PC-9 (cell line): ENCODE measurements at regions of chr1 and their contacts with region 1.

Region 1: DNA sequence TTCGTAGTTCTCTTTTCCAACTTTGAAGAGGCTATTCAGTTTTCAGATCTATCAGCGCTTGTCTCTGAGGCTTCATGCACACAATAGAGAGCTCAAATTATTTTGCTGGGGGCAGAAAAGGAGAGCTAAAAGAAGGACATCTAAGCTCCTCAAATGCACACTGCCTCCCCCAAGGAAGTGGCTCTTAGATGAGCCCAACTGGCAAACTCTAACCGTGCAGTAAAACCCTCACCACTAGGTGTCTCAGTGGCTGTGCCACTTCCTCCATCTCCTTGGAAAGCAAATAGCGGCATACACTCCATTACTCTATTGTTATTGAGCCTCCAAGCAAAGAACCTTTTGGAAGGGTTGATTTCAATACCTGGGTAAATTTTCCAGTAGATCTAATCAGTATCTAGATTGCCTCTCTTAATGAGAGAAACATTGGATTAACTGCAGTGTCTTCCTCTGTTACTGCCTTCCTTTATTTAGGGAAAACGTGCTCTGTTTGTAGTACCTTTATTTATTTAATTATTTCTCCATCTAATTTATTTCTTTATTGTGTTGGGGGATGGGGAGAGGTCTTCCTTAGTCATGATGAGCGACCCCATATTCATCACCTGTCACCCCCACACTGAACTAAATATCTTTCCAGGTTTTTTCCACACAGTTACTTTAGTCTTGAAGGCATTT is 9.2 kb upstream of the SFPQ start:
- DNase-seq: peak; percentile 60 to 65
- H3K4me3 ChIP-seq: no peak overlapping the region
- H3K27ac ChIP-seq: no peak overlapping the region
- H3K4me1 ChIP-seq: no peaks in the 10 kb centered on the region
- H3K27me3 ChIP-seq: no peaks in the 10 kb centered on the region
- CTCF ChIP-seq: peak; percentile 80

Region 2: DNA sequence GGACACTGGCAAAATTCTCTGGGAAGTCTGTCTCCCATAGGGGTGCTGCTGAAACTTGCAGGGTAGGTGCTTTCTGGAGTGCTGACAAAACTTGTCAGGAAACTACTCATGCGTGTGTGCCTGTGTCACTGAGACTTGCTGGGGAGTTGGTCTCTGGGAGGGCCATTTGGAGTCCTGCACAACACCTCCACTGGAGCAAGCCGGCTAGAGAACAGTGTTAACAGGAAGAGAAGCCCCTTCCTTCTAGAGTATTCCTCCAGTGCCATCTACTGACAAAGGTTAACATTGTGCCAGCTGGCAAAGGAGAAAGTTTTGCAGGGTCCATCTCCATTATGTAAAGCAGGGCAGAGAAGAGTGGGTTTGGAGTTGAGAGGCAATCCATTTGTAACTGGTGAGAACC is 96.3 kb after region 1 on chr1:
- CTCF ChIA-PET with region 1: interaction called, 5 read pairs
- POLR2A ChIA-PET with region 1: no interaction called
- intact Hi-C with region 1: loop called (anchors 1 kb)
- DNase-seq: no peak
- H3K4me3 ChIP-seq: no peak overlapping the region
- H3K27ac ChIP-seq: no peak overlapping the region
- H3K4me1 ChIP-seq: no peaks in the 10 kb centered on the region
- H3K27me3 ChIP-seq: no peaks in the 10 kb centered on the region
- CTCF ChIP-seq: peak; percentile 52; the same call in 1 of the 2 replicates

Region 3: DNA sequence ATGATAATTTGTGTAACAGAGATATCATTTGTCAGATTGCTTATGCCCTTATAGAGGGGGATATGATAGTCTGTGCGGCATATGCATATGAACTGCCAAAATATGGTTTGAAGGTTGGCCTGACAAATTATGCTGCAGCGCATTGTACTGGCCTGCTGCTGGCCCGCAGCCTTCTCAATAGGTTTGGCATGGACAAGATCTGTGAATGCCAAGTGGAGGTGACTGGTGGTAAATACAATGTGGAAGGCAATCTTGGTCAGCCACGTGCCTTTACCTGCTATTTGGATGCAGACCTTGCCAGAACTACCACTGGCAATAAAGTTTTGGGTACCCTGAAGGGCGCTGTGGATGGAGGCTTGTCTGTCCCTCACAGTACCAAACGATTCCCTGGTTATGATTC is 148.7 kb after region 1 on chr1:
- CTCF ChIA-PET with region 1: no interaction called
- POLR2A ChIA-PET with region 1: no interaction called
- intact Hi-C with region 1: loop called (anchors 10 kb)
- DNase-seq: no peak
- H3K4me3 ChIP-seq: no peak overlapping the region
- H3K27ac ChIP-seq: no peak overlapping the region
- H3K4me1 ChIP-seq: no peaks in the 10 kb centered on the region
- H3K27me3 ChIP-seq: no peaks in the 10 kb centered on the region
- CTCF ChIP-seq: no peak

Region 4: DNA sequence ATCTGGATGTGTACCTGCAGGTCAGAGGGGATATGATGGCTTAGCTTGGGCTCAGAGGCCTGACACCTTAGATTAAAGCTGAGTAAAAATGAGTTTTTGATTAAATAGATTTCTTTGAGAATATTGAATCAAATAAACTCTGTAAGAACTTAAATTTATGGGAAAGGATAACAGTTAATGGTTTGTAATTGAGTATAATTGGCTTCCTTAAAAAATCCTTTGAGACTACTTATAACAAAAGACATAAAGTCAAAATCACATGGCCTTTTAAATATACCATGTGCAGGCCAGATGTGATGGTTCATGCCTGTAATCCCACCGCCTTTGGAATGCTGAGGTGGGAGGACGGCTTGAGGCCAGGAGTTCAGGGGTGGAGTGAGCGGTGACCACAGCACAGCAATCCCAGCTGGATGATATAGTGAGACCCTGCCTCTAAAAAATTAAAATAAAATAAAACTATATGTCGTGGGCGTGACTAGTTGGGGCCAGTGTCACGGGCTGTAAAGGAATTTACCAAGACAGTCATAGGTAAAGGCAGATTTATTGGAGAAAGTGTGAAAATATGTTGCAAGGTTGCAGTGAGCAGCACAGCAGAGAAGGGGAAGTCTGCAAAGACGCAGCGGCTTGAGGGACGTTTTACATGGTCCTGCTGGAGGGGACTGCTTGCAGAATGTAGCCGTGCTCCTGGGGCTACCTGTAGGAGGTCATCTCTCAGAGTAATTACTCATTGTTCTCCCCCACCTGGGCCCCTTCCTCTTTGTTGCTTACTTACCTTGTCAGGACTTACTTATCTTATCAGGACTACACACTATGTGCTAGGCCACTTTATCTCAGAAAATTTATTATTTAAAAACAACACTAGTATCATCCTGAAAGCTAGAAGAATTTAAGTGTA is 188.7 kb after region 1 on chr1:
- CTCF ChIA-PET with region 1: no interaction called
- POLR2A ChIA-PET with region 1: no interaction called
- intact Hi-C with region 1: loop called (anchors 10 kb)
- DNase-seq: no peak
- H3K4me3 ChIP-seq: no peak overlapping the region
- H3K27ac ChIP-seq: no peak overlapping the region
- H3K4me1 ChIP-seq: no peaks in the 10 kb centered on the region
- H3K27me3 ChIP-seq: no peaks in the 10 kb centered on the region
- CTCF ChIP-seq: no peak

Region 5: DNA sequence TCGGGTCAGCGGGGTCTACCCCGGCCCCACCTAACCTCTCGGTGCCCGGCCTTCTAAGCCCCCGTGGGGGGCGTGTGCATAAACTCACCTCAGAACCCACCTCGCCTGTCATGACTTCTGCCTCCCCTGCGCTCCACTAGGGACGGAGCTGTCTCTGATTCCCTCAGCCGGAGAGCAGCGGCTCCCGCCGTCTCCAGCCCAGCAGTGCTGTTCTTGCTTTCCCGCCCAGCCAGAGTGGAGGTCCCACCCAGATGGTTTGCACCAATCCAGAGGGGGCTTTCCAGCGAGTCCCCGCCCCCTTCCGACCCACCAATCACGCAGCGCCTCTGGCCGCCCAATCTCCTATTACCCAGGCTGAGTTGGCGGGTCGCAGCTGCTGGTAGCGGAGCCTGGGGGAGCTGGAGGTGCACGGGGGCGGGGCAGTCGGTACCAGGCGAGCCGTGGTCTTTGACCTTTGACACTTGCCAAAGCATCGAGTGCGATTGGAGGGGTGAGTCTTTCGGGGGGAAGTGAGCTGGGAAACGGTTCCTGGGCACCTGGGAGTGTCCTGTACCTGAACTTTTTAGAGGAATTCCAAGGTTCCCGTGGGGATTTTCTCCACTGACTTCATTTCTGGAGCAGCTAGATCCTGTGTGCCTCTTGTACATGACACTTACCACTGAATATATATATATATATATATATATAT is 567.7 kb after region 1 on chr1 and contains the start of gene CLSPN:
- CTCF ChIA-PET with region 1: no interaction called
- POLR2A ChIA-PET with region 1: no interaction called
- intact Hi-C with region 1: loop called (anchors 5 kb)
- DNase-seq: peak; percentile 90 to 98
- H3K4me3 ChIP-seq: peak within 1 kb of the TSS; percentile 99
- H3K27ac ChIP-seq: no peak within 1 kb of the TSS
- H3K4me1 ChIP-seq: peaks cover 5% of the 10 kb centered on the region; the same call in 1 of the 2 replicates
- H3K27me3 ChIP-seq: no peaks in the 10 kb centered on the region
- CTCF ChIP-seq: no peak
- total RNA-seq, gene CLSPN: 18.9 and 26.7 TPM in 2 replicates

Region 6: GRCh38 chr1:36846357-36846756 is 1644.2 kb after region 1 on chr1:
- CTCF ChIA-PET with region 1: no interaction called
- POLR2A ChIA-PET with region 1: no interaction called
- intact Hi-C with region 1: no loop called
- DNase-seq: no peak
- H3K4me3 ChIP-seq: no peak overlapping the region
- H3K27ac ChIP-seq: no peak overlapping the region
- H3K4me1 ChIP-seq: 0 out of 2 replicates have a peak, but pooled peaks cover 6% of the 10 kb centered on the region
- H3K27me3 ChIP-seq: peaks cover 31% of the 10 kb centered on the region
- CTCF ChIP-seq: no peak